ENCODE measurements at regions of chr19 and their contacts with region 1.

Region 1: DNA sequence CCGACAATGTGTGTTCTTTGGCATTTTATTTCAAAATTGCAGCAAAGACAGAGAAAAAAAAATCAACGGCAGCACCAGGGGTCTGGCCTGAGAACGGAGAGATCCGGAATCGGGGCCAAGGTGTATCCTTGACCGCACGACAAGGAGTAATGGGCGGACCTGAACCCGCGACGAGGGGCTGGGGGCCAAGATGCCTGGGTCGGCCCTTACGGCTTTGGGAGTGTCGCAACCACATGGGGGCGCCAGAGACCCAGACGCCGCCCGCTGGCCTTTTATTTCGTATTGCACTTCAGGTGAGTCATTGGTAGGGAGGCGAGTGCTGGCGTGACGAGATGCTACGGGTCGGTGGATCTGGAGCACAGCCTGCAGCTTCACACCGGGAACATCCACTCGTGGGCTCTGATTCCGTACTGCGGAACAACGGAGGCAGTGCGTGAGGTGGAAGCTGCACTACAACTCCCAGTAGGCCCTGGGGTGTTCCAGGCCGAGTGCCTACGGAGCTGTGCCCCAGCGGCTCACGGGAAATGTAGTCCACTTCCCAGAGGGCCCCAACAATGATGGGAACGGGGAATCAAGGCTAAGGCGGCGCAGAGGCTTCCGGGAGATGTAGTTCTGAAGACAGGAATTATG is 15.7 kb downstream of the BCAT2 start:
- DNase-seq: peak; percentile 65
- H3K4me3 ChIP-seq: peak overlapping the region; percentile 70
- CTCF ChIP-seq: peak; percentile 93

Region 2: DNA sequence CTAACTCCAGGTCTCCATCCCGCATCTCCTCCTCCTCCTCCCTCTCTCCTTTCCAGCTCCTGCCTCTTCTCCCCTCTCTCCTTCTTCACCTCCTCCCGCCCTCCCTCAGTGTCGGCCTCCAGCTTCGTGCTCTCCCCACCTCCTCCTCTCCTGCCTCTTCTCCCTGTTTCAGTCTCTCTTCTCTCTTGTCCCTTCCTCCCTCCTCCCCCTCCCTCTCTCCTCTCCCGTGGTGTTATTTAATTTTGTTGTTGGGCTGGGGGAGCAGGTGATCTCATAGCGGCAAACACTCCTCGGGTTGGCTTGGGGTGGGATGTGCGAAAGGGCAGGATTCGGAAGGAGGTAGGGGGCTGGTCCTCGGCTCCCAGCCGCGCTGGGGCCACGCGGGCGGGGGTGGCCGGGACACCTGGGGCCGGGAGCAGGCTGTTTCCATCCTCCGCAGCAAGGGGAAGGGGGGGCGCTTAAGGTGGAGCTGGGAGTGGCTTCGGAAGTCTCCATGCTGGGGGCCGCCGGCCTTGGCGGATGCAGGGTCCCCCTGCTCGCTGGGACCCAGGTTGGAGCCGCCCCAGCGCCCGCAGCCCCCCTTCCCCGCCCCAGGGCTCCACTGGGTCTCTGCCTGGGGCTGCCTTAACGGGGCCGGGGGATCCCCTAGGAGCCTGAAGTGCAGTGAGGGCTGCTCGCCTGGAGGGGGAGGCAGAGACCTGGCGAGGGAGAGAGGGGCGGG is 149.0 kb before region 1 on chr19 and contains the start of gene CA11:
- CTCF ChIA-PET with region 1: no interaction called
- POLR2A ChIA-PET with region 1: no interaction called
- DNase-seq: no peak
- H3K4me3 ChIP-seq: peak within 1 kb of the TSS; percentile 57
- CTCF ChIP-seq: peak; percentile 95

Region 3: DNA sequence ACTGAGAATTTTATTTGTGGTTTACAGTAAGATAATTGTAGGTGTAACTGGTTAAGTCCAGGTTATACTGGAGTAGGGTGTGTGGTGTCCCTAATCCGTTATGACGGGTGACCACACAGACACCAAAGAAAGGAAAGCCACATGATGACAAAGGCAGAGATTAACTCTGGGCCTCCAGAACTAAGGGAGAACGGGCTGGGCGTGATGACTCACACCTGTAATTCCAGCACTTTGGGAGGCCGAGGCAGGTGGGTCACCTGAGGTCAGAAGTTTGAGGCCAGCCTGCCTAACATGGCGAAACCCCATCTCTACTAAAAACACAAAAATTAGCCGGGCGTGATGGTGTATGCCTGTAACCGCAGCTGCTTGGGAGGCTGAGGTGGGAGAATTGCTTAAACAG is 109.6 kb before region 1 on chr19:
- CTCF ChIA-PET with region 1: no interaction called
- POLR2A ChIA-PET with region 1: no interaction called
- DNase-seq: no peak
- H3K4me3 ChIP-seq: no peak overlapping the region
- CTCF ChIP-seq: no peak

Region 4: GRCh38 chr19:48734625-48735555 is 60.3 kb before region 1 on chr19:
- CTCF ChIA-PET with region 1: no interaction called
- POLR2A ChIA-PET with region 1: no interaction called
- DNase-seq: no peak
- H3K4me3 ChIP-seq: peak overlapping the region; percentile 6; the same call in 1 of the 2 replicates
- CTCF ChIP-seq: no peak

Region 5: DNA sequence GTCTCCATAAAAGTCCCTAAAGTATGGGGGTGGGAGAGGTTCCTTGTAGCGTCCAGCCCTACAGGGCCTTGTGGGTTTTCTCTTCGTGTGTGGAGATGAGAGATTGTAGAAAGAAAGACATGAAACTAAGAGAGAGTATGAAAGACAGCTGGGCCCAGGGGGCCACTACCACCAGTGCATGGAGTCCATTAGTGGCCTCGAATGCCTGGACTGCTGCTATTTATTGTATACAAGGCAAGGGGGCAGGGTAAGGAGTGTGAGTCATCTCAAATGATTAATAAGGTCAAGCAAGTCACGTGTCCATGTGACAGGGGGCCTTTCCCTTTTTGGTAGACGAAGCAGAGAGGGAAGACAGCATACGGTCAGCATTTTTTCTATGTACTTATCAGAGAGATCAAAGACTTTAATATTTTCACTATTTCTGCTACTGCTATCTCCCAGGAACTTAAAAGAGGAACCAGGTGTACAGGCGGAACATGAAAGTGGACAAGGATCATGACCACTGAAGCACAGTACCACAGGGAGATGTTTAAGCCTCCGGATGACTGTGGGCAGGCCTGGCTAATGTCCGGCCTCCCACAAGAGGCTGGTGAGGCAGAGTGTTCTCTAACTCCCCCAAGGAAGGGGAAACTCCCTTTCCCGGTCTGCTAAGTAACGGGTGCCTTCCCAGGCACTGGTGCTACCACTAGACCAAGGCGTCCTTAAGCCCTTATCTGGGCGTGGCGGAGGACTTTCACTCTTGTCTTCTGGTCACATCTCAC is 14.4 kb before region 1 on chr19:
- CTCF ChIA-PET with region 1: interaction called, 83 read pairs
- POLR2A ChIA-PET with region 1: no interaction called
- DNase-seq: no peak
- H3K4me3 ChIP-seq: no peak overlapping the region
- CTCF ChIP-seq: no peak

Region 6: GRCh38 chr19:48812094-48812929 is 17.1 kb after region 1 on chr19:
- CTCF ChIA-PET with region 1: interaction called, 63 read pairs
- POLR2A ChIA-PET with region 1: interaction called, 4 read pairs
- DNase-seq: no peak
- H3K4me3 ChIP-seq: peak overlapping the region; percentile 72
- CTCF ChIP-seq: no peak

Region 7: GRCh38 chr19:48835734-48836088 is 40.5 kb after region 1 on chr19:
- CTCF ChIA-PET with region 1: interaction called, 737 read pairs
- POLR2A ChIA-PET with region 1: interaction called, 4 read pairs
- DNase-seq: no peak
- H3K4me3 ChIP-seq: peak overlapping the region; percentile 64
- CTCF ChIP-seq: peak; percentile 92

Region 8: DNA sequence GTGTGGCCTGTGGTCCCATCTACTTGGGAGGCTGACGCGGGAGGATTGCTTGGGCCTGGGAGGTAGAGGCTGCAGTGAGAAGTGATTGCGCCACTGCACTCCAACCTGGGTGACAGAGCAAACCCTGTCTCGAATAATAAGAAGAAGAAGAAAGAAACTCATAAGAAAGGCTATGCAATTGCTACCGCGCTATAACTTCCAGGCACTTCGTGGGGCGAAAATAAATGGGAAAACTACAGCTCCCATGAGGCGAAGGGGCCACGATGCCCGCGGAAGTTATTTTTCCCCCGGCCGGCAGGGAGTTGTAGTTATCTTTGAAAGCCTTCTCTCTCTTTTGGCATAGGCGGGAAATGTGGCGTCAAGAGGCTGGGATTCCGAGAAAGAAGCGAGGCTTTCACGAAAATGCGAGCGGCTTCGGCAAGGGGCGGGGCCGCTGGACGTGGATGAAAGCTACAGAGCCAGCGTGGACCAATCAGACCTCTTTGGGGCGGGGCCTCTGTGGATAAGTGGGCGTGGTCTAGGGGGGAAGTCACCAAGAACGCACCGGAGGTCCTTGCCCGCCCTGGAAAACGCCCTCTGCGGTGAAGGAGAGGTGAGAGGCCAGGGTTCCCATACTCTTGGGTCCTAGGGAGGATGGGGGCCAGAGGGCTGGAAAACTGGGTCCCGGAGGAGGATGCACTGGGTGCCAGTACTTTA is 104.8 kb after region 1 on chr19 and contains the start of gene NUCB1:
- CTCF ChIA-PET with region 1: no interaction called
- POLR2A ChIA-PET with region 1: no interaction called
- DNase-seq: peak; percentile 83
- H3K4me3 ChIP-seq: peak within 1 kb of the TSS; percentile 97
- CTCF ChIP-seq: peak; percentile 17